Right ventricle myocardium superior (tissue), 1 donor: ENCODE measurements at regions of chr11 and their contacts with region 1.

Region 1: DNA sequence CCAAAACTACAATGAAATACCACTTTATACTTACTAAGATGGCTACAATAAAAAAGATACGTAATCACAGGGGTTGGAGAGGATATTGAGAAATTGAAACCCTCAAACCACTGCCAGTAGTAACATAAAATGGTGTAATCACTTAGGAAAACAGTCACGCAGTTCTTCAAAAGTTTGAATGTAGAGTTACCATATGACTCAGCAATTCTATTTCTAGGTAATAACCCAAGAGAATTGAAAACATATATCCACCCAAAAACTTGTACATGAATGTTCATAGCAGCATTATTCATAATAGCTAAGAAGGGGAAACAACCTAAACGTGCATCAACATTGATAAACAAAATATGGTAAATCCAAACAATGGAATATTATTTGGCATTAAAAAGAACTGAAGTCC is 24.4 kb upstream of the PSMA1 start:
- DNase-seq: no peak
- ATAC-seq: no peak

Region 2: GRCh38 chr11:14643697-14644225 is 99.2 kb after region 1 on chr11 and contains the start of gene PDE3B:
- intact Hi-C with region 1: loop called (anchors 5 kb)
- DNase-seq: peak; percentile 89
- ATAC-seq: peak; percentile 95
- total RNA-seq, gene PDE3B: 5.3 TPM

Region 3: GRCh38 chr11:14764579-14765527 is 220.2 kb after region 1 on chr11:
- intact Hi-C with region 1: no loop called
- DNase-seq: no peak
- ATAC-seq: no peak

Region 4: GRCh38 chr11:14809466-14809865 is 264.9 kb after region 1 on chr11:
- intact Hi-C with region 1: no loop called
- DNase-seq: no peak
- ATAC-seq: no peak